Transverse colon (tissue), 4 donors: ENCODE measurements at regions of chrX and their contacts with region 1.

Region 1: GRCh38 chrX:63754860-63755582 is 30.0 kb downstream of the ARHGEF9 start:
- DNase-seq: peak; percentile 92
- H3K4me3 ChIP-seq: peak overlapping the region; percentile 47 to 78 (median 61)
- H3K27ac ChIP-seq: peak overlapping the region; percentile 90 to 94 (median 92)
- H3K4me1 ChIP-seq: peaks cover 0 to 20% (median 6%) of the 10 kb centered on the region in 4 donors
- H3K27me3 ChIP-seq: no peaks in the 10 kb centered on the region
- CTCF ChIP-seq: no peak
- EP300 ChIP-seq: no peak
- POLR2A ChIP-seq: peak; percentile 78

Region 2: DNA sequence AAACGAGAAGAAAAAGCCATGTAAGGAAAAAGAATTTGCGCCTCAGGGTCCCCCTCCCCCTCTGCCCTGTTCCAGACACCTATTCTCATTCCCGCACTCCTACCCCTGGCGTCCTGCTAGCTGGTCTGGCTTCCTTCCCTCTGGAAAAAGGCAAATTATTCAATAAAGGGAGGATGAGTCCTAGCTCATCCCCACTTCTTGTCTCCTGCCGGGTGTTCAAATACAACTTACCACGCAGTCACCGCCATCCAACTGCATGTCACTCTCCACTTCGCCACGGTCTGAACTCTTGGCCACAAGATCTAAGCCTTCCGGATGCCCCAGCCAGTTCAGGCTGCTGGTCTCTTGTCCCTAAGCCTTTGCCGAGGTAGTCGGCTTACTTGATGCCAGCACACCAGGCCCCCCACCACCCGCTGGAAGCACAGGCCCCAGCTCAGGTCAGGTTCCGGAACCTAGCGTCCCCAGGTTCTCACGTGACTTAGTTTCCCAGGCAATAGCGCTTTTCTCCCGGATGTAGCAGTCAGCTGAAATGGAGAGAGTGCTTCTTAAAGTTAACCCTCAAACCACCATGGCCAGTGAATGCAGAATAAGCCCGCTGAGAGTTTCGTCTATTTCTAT is 194.3 kb before region 1 on chrX:
- in situ Hi-C with region 1: loop called in 1 of 4 experiments (anchors 25 kb)
- intact Hi-C with region 1: no loop called
- DNase-seq: peak; percentile 62
- H3K4me3 ChIP-seq: peak overlapping the region; percentile 40 to 71 (median 53)
- H3K27ac ChIP-seq: peak overlapping the region; percentile 71 to 84 (median 74)
- H3K4me1 ChIP-seq: peaks cover 0 to 10% (median 0%) of the 10 kb centered on the region in 4 donors
- H3K27me3 ChIP-seq: no peaks in the 10 kb centered on the region
- CTCF ChIP-seq: no peak
- EP300 ChIP-seq: no peak
- POLR2A ChIP-seq: no peak